ENCODE measurements at regions of chr10 and their contacts with region 1.

Region 1: DNA sequence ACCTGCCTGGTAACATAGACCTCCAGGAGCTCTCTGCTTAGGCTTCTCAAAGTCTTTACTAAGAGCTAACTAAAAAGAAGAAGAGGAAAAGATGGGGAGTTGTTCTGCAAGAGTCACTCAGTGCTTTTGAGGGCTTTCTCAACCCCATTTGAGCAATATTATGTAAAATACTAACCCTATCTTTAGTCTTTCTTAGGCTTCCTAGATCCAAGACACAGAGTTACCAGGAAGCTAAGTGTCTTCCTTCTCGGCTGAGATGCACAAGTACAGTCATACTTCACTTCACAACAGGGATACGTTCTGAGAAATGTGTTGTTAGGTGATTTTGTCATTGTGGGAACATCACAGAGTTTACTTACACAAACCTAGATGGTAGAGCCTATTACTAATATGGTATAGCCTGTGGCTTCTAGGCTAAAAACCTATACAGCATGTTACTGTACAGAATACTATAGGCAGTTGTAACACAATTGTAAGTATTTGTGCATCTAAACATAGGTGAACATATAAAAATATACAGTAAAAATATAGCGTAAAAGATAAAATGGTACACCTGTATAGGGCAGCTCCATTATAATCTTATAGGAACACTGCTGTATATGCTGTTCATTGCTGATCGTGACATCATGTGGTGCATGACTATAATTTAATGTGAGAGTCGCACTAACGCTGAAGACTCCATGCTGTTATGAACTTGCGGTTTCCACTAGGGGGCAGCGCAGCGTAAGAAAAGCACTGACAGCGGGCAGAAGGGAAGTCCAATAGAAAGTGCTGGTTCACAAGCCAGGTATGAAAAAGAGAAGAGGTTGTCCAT is 16.3 kb downstream of the ANKRD22 start:
- DNase-seq: peak; percentile 93
- ATAC-seq: peak; percentile 90
- H3K4me3 Mint-ChIP-seq: no peak overlapping the region
- H3K27ac Mint-ChIP-seq: no peak overlapping the region
- H3K4me1 Mint-ChIP-seq: peaks cover 28% of the 10 kb centered on the region
- H3K27me3 Mint-ChIP-seq: no peaks in the 10 kb centered on the region

Region 2: GRCh38 chr10:88557659-88558058 is 277.6 kb before region 1 on chr10:
- CTCF ChIA-PET with region 1: no interaction called
- POLR2A ChIA-PET with region 1: no interaction called
- intact Hi-C with region 1: no loop called
- DNase-seq: no peak
- ATAC-seq: no peak
- H3K4me3 Mint-ChIP-seq: no peak overlapping the region
- H3K27ac Mint-ChIP-seq: no peak overlapping the region
- H3K4me1 Mint-ChIP-seq: peaks cover 14% of the 10 kb centered on the region
- H3K27me3 Mint-ChIP-seq: no peaks in the 10 kb centered on the region

Region 3: DNA sequence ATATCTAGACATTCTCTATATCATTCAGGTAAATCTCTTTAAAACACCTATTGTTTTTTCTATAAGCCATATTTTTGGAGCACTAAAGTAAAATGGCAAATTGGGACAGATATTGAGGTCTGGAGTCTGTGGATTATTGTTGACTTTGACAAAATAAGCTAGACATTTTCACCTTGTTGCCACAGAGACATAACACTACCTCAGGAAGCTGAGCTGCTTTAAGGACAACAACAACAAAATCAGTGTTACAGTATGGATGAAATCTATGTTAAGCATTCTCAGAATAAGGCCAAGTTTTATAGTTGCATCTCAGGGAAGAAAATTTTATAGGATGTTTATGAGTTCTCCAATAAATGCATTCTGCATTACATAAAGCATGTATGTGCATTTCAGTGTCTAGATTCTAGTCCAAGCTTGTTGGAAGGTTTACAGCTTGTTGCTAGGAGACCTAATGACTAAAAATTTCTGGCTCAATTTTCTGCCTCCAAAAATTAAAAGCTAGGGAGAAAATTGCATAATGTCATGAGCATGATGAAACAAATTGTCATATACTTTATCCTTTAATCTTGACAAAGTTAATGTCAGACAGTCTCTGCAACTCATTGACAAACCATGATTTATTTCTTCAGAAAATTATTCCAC is 14.4 kb before region 1 on chr10:
- CTCF ChIA-PET with region 1: interaction called, 48 read pairs
- POLR2A ChIA-PET with region 1: no interaction called
- intact Hi-C with region 1: no loop called
- DNase-seq: no peak
- ATAC-seq: no peak
- H3K4me3 Mint-ChIP-seq: no peak overlapping the region
- H3K27ac Mint-ChIP-seq: no peak overlapping the region
- H3K4me1 Mint-ChIP-seq: peaks cover 28% of the 10 kb centered on the region
- H3K27me3 Mint-ChIP-seq: no peaks in the 10 kb centered on the region

Region 4: GRCh38 chr10:88865281-88865876 is 30.1 kb after region 1 on chr10:
- CTCF ChIA-PET with region 1: interaction called, 8 read pairs
- POLR2A ChIA-PET with region 1: no interaction called
- intact Hi-C with region 1: loop called (anchors 2 kb)
- DNase-seq: no peak
- ATAC-seq: peak; percentile 49
- H3K4me3 Mint-ChIP-seq: no peak overlapping the region
- H3K27ac Mint-ChIP-seq: no peak overlapping the region
- H3K4me1 Mint-ChIP-seq: no peaks in the 10 kb centered on the region
- H3K27me3 Mint-ChIP-seq: peaks cover 11% of the 10 kb centered on the region

Region 5: GRCh38 chr10:88908194-88908593 is 72.9 kb after region 1 on chr10:
- CTCF ChIA-PET with region 1: interaction called, 31 read pairs
- POLR2A ChIA-PET with region 1: no interaction called
- intact Hi-C with region 1: no loop called
- DNase-seq: peak; percentile 34
- ATAC-seq: peak; percentile 89
- H3K4me3 Mint-ChIP-seq: peak overlapping the region; percentile 24
- H3K27ac Mint-ChIP-seq: peak overlapping the region; percentile 69
- H3K4me1 Mint-ChIP-seq: peaks cover 22% of the 10 kb centered on the region
- H3K27me3 Mint-ChIP-seq: no peaks in the 10 kb centered on the region

Region 6: GRCh38 chr10:89029785-89030437 is 194.6 kb after region 1 on chr10:
- CTCF ChIA-PET with region 1: interaction called, 6 read pairs
- POLR2A ChIA-PET with region 1: no interaction called
- intact Hi-C with region 1: loop called in 1 of 2 experiments (anchors 5 kb)
- DNase-seq: peak; percentile 85
- ATAC-seq: peak; percentile 64
- H3K4me3 Mint-ChIP-seq: no peak overlapping the region
- H3K27ac Mint-ChIP-seq: no peak overlapping the region
- H3K4me1 Mint-ChIP-seq: peaks cover 32% of the 10 kb centered on the region
- H3K27me3 Mint-ChIP-seq: no peaks in the 10 kb centered on the region

Region 7: GRCh38 chr10:89217057-89217990 is 382.0 kb after region 1 on chr10:
- CTCF ChIA-PET with region 1: interaction called, 13 read pairs
- POLR2A ChIA-PET with region 1: no interaction called
- intact Hi-C with region 1: loop called (anchors 2 to 5 kb)
- DNase-seq: peak; percentile 76
- ATAC-seq: peak; percentile 55
- H3K4me3 Mint-ChIP-seq: no peak overlapping the region
- H3K27ac Mint-ChIP-seq: no peak overlapping the region
- H3K4me1 Mint-ChIP-seq: peaks cover 9% of the 10 kb centered on the region
- H3K27me3 Mint-ChIP-seq: no peaks in the 10 kb centered on the region